ENCODE measurements at regions of chr1 and their contacts with region 1.

Region 1: DNA sequence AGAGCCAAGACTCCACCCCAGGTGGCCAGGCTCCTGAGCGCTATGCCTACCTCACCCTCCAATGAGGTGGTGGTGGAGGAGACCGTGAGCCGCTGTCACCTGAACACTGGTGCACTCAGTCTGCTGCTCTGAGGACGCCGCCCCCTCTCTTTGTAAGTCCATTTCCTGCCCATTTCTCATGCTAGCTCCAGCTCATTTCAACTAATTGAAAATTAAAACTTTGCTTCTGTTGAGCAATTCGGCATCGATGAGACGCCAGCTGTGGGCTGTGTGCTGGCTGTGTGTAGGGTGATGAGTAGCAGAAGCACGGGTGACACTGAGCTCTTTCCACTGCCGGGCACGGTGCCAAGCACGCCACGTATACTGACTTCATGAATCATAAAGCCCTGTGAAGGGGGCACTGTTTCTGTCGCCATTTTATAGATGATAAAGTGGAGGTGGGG is 11.2 kb downstream of the TNFRSF1B start:
- DNase-seq: peak; percentile 81 to 95 (median 86)
- ATAC-seq: peak; percentile 63 to 71
- H3K4me3 Mint-ChIP-seq: peak overlapping the region; percentile 77 to 95 (median 84)
- H3K27ac Mint-ChIP-seq: peak overlapping the region; percentile 95 to 100 (median 98)
- H3K4me1 Mint-ChIP-seq: peaks cover 47 to 95% (median 79%) of the 10 kb centered on the region in 4 donors
- H3K27me3 Mint-ChIP-seq: peaks cover 0 to 2% (median 0%) of the 10 kb centered on the region in 5 donors

Region 2: GRCh38 chr1:12052008-12052573 is 125.9 kb before region 1 on chr1:
- POLR2A ChIA-PET with region 1: no interaction called
- DNase-seq: peak in 1 of 10 donors; percentile 46
- ATAC-seq: no peak
- H3K4me3 Mint-ChIP-seq: no peak overlapping the region
- H3K27ac Mint-ChIP-seq: no peak overlapping the region
- H3K4me1 Mint-ChIP-seq: peaks cover 0 to 6% (median 2%) of the 10 kb centered on the region in 4 donors
- H3K27me3 Mint-ChIP-seq: no peaks in the 10 kb centered on the region

Region 3: GRCh38 chr1:12124693-12125421 is 53.2 kb before region 1 on chr1:
- POLR2A ChIA-PET with region 1: interaction called, 16 read pairs
- DNase-seq: peak; percentile 60 to 94 (median 76)
- ATAC-seq: peak; percentile 44 to 67
- H3K4me3 Mint-ChIP-seq: peak overlapping the region in 5 of 10 donors; percentile 2 to 67 (median 34)
- H3K27ac Mint-ChIP-seq: peak overlapping the region in 8 of 10 donors; percentile 14 to 75 (median 48)
- H3K4me1 Mint-ChIP-seq: peaks cover 23 to 45% (median 40%) of the 10 kb centered on the region in 4 donors
- H3K27me3 Mint-ChIP-seq: peaks cover 0 to 19% (median 3%) of the 10 kb centered on the region in 5 donors

Region 4: GRCh38 chr1:12161662-12162458 is 16.2 kb before region 1 on chr1:
- POLR2A ChIA-PET with region 1: interaction called, 43 read pairs
- DNase-seq: peak in 5 of 10 donors; percentile 27 to 79 (median 56)
- ATAC-seq: peak; percentile 74 to 78
- H3K4me3 Mint-ChIP-seq: peak overlapping the region in 9 of 10 donors; percentile 18 to 73 (median 61)
- H3K27ac Mint-ChIP-seq: peak overlapping the region; percentile 43 to 89 (median 72)
- H3K4me1 Mint-ChIP-seq: peaks cover 36 to 84% (median 68%) of the 10 kb centered on the region in 4 donors
- H3K27me3 Mint-ChIP-seq: no peaks in the 10 kb centered on the region

Region 5: DNA sequence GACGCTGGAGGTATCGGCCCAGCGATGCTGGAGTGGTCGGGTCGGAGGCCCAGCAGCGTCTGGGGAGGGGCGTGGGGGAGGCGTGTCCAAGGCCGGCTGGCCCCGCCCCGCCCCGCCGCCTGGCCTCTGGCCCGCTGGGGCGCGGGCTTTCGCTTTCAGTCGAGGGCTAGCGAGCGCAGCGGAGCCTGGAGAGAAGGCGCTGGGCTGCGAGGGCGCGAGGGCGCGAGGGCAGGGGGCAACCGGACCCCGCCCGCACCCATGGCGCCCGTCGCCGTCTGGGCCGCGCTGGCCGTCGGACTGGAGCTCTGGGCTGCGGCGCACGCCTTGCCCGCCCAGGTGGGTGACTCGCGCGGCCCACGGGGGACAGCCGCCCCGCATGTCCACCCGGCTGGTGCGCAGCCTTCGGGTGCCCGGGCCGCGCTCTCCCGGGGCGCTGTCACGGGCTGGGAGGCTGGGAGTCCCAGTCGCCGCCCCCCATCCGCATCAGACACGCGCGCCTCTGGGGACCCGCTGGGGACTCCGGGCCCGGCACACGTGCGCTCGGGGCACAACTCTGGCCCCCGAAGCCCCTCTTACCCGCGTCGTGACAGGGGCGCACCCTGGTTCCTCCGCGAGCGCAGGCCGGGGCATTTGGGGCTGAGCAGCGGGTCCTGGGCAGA is 11.1 kb before region 1 on chr1 and contains the start of gene TNFRSF1B:
- POLR2A ChIA-PET with region 1: interaction called, 43 read pairs
- DNase-seq: peak in 8 of 10 donors; percentile 30 to 74 (median 52)
- ATAC-seq: peak; percentile 71 to 73
- H3K4me3 Mint-ChIP-seq: peak within 1 kb of the TSS; percentile 94 to 100 (median 97)
- H3K27ac Mint-ChIP-seq: peak within 1 kb of the TSS; percentile 93 to 98 (median 97)
- H3K4me1 Mint-ChIP-seq: peaks cover 29 to 77% (median 66%) of the 10 kb centered on the region in 4 donors
- H3K27me3 Mint-ChIP-seq: no peaks in the 10 kb centered on the region
- polyA plus RNA-seq, gene TNFRSF1B: 19.7 to 64.6 (median 21.8) TPM

Region 6: GRCh38 chr1:12258272-12258671 is 80.3 kb after region 1 on chr1:
- POLR2A ChIA-PET with region 1: no interaction called
- DNase-seq: no peak
- ATAC-seq: no peak
- H3K4me3 Mint-ChIP-seq: no peak overlapping the region
- H3K27ac Mint-ChIP-seq: no peak overlapping the region
- H3K4me1 Mint-ChIP-seq: peaks cover 0 to 3% (median 0%) of the 10 kb centered on the region in 4 donors
- H3K27me3 Mint-ChIP-seq: no peaks in the 10 kb centered on the region